Dorsolateral prefrontal cortex (tissue), 120 donors: ENCODE measurements at regions of chr2 and their contacts with region 1.

Region 1: GRCh38 chr2:71545572-71546274 is 92.4 kb downstream of the DYSF start:
- DNase-seq: peak; percentile 52 to 72 (median 66)
- H3K4me3 ChIP-seq: peak overlapping the region in 31 of 59 donors; percentile 1 to 53 (median 25)
- H3K27ac ChIP-seq: peak overlapping the region in 5 of 59 donors; percentile 20 to 81 (median 67)
- H3K27me3 ChIP-seq: no peaks in the 10 kb centered on the region
- CTCF ChIP-seq: peak; percentile 50 to 91 (median 80)

Region 2: GRCh38 chr2:71482055-71482454 is 63.7 kb before region 1 on chr2:
- intact Hi-C with region 1: no loop called
- DNase-seq: peak in 1 of 10 donors; percentile 23
- H3K4me3 ChIP-seq: no peak overlapping the region
- H3K27ac ChIP-seq: no peak overlapping the region
- H3K27me3 ChIP-seq: no peaks in the 10 kb centered on the region
- CTCF ChIP-seq: no peak

Region 3: GRCh38 chr2:71592181-71592711 is 46.5 kb after region 1 on chr2:
- intact Hi-C with region 1: loop called in 1 of 2 experiments (anchors 2 kb)
- DNase-seq: peak in 9 of 10 donors; percentile 40 to 78 (median 68)
- H3K4me3 ChIP-seq: peak overlapping the region in 1 of 59 donors; percentile 22
- H3K27ac ChIP-seq: peak overlapping the region; percentile 53 to 99 (median 95)
- H3K27me3 ChIP-seq: no peaks in the 10 kb centered on the region
- CTCF ChIP-seq: peak in 2 of 56 donors; percentile 9 to 13

Region 4: DNA sequence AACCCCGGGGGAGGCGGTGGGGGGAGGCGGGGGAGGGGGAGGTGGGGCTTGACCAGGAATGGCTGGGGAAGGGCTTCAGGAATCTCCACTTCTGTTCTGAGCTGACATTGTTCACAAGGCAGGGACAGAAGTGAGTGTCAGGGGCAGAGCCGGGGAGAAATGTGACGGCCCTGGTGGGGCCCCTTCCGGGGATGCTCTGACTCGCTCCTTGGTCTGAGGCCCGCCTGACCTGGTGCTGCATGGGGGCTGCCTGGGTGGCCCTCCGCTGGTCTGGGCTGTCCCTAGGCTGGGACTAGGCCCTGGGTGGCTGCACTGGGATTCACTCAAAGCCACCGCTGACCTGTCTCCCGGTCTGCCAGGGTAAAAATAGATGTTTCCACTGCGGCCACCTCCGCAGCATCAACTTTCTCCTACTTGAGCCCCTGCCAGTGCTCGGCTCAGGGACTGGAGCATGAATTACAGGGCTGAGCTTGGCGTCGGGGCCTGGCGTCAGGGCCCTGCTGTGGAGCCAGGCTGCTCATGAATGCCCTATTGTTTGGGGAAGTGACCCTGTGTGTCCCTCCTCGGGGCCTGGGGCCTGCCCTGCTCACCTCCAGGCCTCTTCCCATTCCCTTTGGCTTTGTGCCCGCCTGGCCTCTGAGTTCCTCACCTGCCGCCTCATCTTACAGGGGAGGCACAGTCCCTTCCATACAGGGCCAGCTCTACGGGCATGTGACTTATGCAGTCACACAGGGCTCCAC is 155.1 kb after region 1 on chr2:
- intact Hi-C with region 1: loop called in 1 of 2 experiments (anchors 5 kb)
- DNase-seq: peak; percentile 24 to 80 (median 76)
- H3K4me3 ChIP-seq: peak overlapping the region in 1 of 59 donors; percentile 27
- H3K27ac ChIP-seq: peak overlapping the region in 52 of 59 donors; percentile 3 to 80 (median 56)
- H3K27me3 ChIP-seq: no peaks in the 10 kb centered on the region
- CTCF ChIP-seq: peak in 2 of 56 donors; percentile 16 to 23

Region 5: DNA sequence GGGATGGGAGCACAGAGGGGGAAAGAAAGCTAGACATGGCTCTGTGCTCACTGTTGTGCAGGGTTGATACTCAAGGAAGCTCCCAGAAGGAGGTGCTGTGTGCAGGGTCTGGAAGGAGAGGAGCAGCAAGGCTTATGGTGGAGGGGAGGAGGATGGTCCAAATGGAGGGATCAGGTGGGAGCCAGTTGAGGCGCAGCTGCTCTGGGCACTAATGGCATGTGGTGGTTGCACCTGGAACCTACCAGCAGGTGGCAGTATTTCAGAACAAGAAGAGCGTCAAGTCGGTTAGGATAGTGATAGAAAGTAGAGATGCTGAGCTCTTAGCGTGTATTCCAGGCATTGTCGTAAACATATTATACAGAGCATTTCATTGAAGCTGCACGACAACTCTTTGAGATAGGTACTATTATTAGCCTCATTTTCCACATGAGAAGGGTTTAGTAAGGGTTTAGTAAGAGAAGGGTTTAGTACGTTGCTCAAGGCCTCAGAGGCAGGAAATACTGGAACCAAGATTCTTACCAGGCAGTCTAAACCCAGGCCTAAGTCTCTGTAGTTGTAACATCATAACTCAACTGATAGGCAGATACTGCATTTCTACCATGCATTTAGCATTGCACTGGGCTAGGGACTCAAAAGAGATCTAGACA is 378.3 kb after region 1 on chr2:
- intact Hi-C with region 1: loop called (anchors 5 to 10 kb)
- DNase-seq: peak in 7 of 10 donors; percentile 40 to 75 (median 69)
- H3K4me3 ChIP-seq: no peak overlapping the region
- H3K27ac ChIP-seq: no peak overlapping the region
- H3K27me3 ChIP-seq: no peaks in the 10 kb centered on the region
- CTCF ChIP-seq: peak; percentile 73 to 95 (median 89)

Region 6: DNA sequence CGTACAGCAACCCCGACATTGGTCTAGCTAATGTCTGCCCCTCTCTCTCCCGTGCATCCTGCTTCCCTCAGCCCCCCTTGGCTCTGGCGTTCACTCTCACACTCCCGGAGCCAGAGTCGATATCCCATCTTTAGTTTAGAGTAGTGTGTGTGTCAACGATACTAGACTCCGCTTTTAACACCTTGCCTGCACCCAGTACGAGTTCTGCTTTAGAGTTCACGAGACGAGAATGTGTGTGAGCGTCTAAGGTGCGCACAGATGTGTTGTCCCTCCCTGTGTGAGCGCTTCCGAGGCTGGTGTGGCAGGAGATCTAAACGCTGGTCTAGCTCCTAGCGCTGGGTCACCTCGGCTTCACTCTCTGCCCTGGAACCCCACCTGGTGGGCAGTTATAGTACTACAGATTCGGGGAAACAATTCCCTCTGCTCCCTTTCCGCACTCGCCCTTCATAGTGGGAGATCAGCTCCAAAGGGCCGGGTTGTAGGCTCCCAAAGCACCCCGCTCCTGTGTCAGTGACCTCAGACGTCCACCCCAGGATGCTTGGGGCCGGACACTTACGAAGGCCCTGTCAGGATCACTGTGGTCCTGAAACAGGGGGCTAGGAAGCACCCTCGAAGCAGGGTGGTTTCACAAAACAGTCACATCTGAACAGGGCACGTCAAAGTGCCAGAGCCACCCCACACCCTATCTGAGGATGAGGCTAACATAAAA is 604.6 kb after region 1 on chr2:
- intact Hi-C with region 1: loop called (anchors 1 to 5 kb)
- DNase-seq: peak in 9 of 10 donors; percentile 61 to 90 (median 77)
- H3K4me3 ChIP-seq: peak overlapping the region; percentile 11 to 73 (median 57)
- H3K27ac ChIP-seq: peak overlapping the region in 4 of 59 donors; percentile 2 to 32 (median 22)
- H3K27me3 ChIP-seq: peaks cover 0 to 46% (median 24%) of the 10 kb centered on the region in 45 donors
- CTCF ChIP-seq: peak; percentile 73 to 96 (median 91)

Region 7: GRCh38 chr2:72745679-72746368 is 1200.1 kb after region 1 on chr2:
- intact Hi-C with region 1: loop called in 1 of 2 experiments (anchors 5 kb)
- DNase-seq: no peak
- H3K4me3 ChIP-seq: no peak overlapping the region
- H3K27ac ChIP-seq: peak overlapping the region in 2 of 59 donors; percentile 11 to 12
- H3K27me3 ChIP-seq: no peaks in the 10 kb centered on the region
- CTCF ChIP-seq: peak; percentile 58 to 94 (median 78)